Mammary epithelial cell (primary cell): ENCODE measurements at regions of chr1 and their contacts with region 1.

Region 1: GRCh38 chr1:245045087-245045881 is 109.5 kb upstream of the KIF26B start:
- DNase-seq: peak; percentile 70
- H3K4me3 ChIP-seq: peak overlapping the region in 2 of 3 experiments; percentile 0 to 13
- H3K27ac ChIP-seq: no peak overlapping the region
- H3K4me1 ChIP-seq: peaks cover 6% of the 10 kb centered on the region
- H3K27me3 ChIP-seq: no peaks in the 10 kb centered on the region
- CTCF ChIP-seq: no peak

Region 2: GRCh38 chr1:244796718-244797406 is 248.4 kb before region 1 on chr1:
- CTCF ChIA-PET with region 1: no interaction called
- dilution Hi-C with region 1: no loop called
- in situ Hi-C with region 1: no loop called
- intact Hi-C with region 1: loop called (anchors 1 kb)
- DNase-seq: peak; percentile 44
- H3K4me3 ChIP-seq: no peak overlapping the region
- H3K27ac ChIP-seq: no peak overlapping the region
- H3K4me1 ChIP-seq: no peaks in the 10 kb centered on the region
- H3K27me3 ChIP-seq: no peaks in the 10 kb centered on the region
- CTCF ChIP-seq: peak; percentile 74 to 91

Region 3: DNA sequence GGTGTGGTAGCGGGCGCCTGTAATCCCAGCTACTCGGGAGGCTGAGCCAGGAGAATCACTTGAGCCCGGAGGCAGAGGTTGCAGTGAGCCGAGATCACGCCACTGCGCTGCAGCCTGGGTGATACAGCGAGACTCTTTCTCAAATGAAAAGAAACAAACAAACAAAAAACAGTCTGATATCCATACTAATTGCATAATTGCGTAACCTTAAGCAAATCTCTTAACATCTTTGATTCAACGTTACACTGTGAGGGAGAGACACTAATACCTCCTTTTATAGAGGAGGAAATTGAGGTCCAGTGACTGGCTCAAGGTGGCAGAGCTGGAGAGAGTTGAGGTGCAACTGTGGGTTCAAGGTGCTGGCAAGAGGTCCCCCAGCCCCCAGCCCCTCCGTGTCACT is 222.4 kb before region 1 on chr1:
- CTCF ChIA-PET with region 1: no interaction called
- dilution Hi-C with region 1: no loop called
- in situ Hi-C with region 1: no loop called
- intact Hi-C with region 1: no loop called
- DNase-seq: no peak
- H3K4me3 ChIP-seq: no peak overlapping the region
- H3K27ac ChIP-seq: no peak overlapping the region
- H3K4me1 ChIP-seq: no peaks in the 10 kb centered on the region
- H3K27me3 ChIP-seq: no peaks in the 10 kb centered on the region
- CTCF ChIP-seq: no peak

Region 4: GRCh38 chr1:244835276-244836134 is 209.8 kb before region 1 on chr1 and contains the start of gene COX20:
- CTCF ChIA-PET with region 1: no interaction called
- dilution Hi-C with region 1: no loop called
- in situ Hi-C with region 1: no loop called
- intact Hi-C with region 1: loop called (anchors 1 kb)
- DNase-seq: peak; percentile 86
- H3K4me3 ChIP-seq: peak within 1 kb of the TSS; percentile 72 to 83 (median 81)
- H3K27ac ChIP-seq: peak within 1 kb of the TSS; percentile 94
- H3K4me1 ChIP-seq: peaks cover 12% of the 10 kb centered on the region
- H3K27me3 ChIP-seq: no peaks in the 10 kb centered on the region
- CTCF ChIP-seq: no peak
- total RNA-seq, gene COX20: 13.7 to 35.4 TPM

Region 5: DNA sequence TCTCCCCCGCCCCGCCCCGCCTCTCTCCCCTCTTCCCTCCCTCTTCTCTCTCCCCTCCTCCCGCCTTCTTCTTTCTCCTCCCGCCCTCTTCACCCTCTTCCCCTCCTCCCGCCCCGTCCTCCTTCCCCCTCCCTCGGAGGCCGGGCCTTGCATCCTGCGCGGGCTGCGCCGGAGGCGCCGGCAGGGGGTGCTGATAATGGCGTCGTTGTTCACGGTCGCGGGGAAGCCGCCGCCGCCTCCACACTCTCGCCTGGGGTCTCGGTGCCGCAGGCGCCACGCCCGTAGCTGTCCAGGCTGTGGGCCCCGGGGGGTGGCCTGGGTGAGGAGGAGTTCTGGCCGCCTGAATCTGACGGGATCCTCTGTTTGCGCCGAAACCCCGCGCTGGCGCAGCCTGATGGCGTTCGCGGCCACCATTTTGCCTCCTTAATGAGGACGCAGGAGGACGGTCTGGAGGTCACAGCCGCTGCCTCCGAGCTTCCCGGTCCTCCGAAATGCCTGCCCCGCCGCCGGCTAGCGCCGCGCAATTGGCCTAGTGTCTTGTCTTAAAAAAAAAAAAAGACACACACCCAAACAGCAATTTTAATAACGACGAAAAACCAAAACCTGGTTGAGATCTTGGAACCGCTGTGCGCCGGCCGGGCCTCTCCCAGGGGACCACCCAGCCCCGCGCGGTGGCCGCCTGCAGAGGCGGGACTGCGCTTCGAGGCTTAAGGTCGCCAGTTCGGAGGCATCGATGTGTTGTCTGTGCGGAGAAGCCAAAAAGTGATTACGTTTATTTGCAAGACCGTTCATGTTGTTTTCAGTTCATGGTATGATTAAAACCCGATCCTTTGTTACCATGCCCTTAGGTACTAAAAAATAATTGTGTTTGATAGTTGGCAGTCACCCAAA is 74.4 kb before region 1 on chr1:
- CTCF ChIA-PET with region 1: interaction called, 10 read pairs
- dilution Hi-C with region 1: no loop called
- in situ Hi-C with region 1: no loop called
- intact Hi-C with region 1: loop called (anchors 1 kb)
- DNase-seq: peak; percentile 96
- H3K4me3 ChIP-seq: peak overlapping the region; percentile 62 to 75 (median 68)
- H3K27ac ChIP-seq: peak overlapping the region; percentile 92
- H3K4me1 ChIP-seq: peaks cover 3% of the 10 kb centered on the region
- H3K27me3 ChIP-seq: no peaks in the 10 kb centered on the region
- CTCF ChIP-seq: peak; percentile 3 to 62